Activated CD4-positive, alpha-beta memory T cell treated with anti-CD3 and anti-CD28 coated beads for 36 hours (primary cell): ENCODE measurements at regions of chr13 and their contacts with region 1.

Region 1: GRCh38 chr13:46668302-46668720 is 115.3 kb downstream of the LRCH1 start:
- DNase-seq: peak; percentile 53
- H3K4me3 Mint-ChIP-seq: peak overlapping the region; percentile 76
- H3K27ac Mint-ChIP-seq: peak overlapping the region; percentile 82
- H3K4me1 Mint-ChIP-seq: peaks cover 37% of the 10 kb centered on the region
- H3K27me3 Mint-ChIP-seq: no peaks in the 10 kb centered on the region

Region 2: GRCh38 chr13:46605825-46606554 is 62.3 kb before region 1 on chr13:
- CTCF ChIA-PET with region 1: no interaction called
- POLR2A ChIA-PET with region 1: no interaction called
- intact Hi-C with region 1: loop called (anchors 2 kb)
- DNase-seq: no peak
- H3K4me3 Mint-ChIP-seq: no peak overlapping the region
- H3K27ac Mint-ChIP-seq: no peak overlapping the region
- H3K4me1 Mint-ChIP-seq: peaks cover 59% of the 10 kb centered on the region
- H3K27me3 Mint-ChIP-seq: no peaks in the 10 kb centered on the region